Caco-2 (cell line): ENCODE measurements at regions of chr15 and their contacts with region 1.

Region 1: DNA sequence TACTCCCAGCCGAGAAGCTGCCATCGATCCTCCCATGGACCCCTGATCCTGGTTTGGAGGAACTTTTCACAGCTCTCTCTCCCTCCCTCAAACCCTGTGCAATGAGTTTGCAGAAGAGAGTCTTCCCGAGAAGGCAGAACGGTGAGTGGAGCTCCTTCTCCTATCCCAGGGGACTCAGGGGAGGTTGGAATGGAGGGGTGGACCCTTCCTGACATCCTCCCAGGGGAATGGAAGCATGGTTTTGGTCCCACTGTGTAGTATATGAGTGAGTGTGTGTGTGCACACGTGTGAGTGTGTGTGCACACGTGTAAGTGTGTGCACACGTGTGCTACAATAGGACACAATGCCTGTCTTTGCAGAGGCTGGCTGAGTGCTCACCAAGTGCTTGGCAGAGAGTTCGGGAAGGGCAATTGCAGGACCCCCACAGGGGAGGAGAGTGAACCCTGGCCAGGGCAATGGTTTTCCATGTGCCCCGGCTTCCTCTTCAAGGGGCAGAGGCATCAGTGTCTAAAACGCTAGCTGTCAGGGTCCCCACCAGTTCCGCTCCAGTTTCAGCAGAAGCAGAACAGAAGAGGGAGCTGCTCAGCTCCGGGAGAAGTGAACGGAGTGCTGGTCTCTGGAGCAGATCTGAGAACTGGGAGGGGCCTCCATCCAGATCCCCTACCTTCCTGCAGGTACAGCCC is 13.8 kb upstream of the IL16 start:
- DNase-seq: no peak
- H3K4me3 ChIP-seq: no peak overlapping the region
- H3K4me3 Mint-ChIP-seq: no peak overlapping the region
- H3K27ac Mint-ChIP-seq: no peak overlapping the region
- H3K4me1 ChIP-seq: no peaks in the 10 kb centered on the region
- H3K4me1 Mint-ChIP-seq: no peaks in the 10 kb centered on the region
- H3K27me3 ChIP-seq: no peaks in the 10 kb centered on the region
- H3K27me3 Mint-ChIP-seq: peaks cover 18% of the 10 kb centered on the region
- CTCF ChIP-seq: no peak

Region 2: DNA sequence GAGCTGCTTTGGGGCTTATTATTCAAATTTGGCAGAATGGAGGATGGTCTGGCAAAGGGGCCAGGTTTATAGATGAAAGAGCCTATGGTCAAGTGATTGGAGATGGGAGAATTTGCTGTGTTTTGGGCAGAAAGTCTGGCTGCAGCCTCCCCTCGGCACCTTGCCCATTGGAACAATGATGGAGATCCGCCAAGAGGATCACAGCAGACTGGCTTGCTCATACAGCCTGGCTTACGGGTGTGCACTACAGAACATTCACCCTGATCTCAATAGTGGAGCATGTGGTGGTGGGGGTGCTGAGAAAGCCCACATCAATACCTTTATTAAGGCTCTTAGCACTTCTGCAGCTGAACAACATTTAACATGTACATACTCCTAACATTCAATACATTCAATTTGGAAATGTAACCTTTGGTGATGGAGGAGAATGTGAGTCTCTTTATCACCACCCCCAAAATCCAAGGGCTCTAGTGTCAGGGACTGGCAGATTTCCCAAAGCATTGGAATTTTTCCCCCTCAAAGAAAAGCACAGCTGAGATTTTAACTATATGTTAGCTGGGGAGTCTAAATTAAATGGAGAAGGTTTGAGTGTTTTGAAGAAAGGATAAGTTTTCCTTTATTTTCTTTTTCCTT is 309.6 kb after region 1 on chr15:
- CTCF ChIA-PET with region 1: interaction called, 11 read pairs
- POLR2A ChIA-PET with region 1: no interaction called
- intact Hi-C with region 1: no loop called
- DNase-seq: no peak
- H3K4me3 ChIP-seq: no peak overlapping the region
- H3K4me3 Mint-ChIP-seq: no peak overlapping the region
- H3K27ac Mint-ChIP-seq: no peak overlapping the region
- H3K4me1 ChIP-seq: no peaks in the 10 kb centered on the region
- H3K4me1 Mint-ChIP-seq: no peaks in the 10 kb centered on the region
- H3K27me3 ChIP-seq: no peaks in the 10 kb centered on the region
- H3K27me3 Mint-ChIP-seq: peaks cover 5% of the 10 kb centered on the region
- CTCF ChIP-seq: no peak